ENCODE measurements at regions of chr17 and their contacts with region 1.

Region 1: GRCh38 chr17:57747221-57748017 is 2.3 kb upstream of the CCDC182 start:
- DNase-seq: no peak
- H3K4me3 ChIP-seq: no peak overlapping the region
- H3K27ac ChIP-seq: no peak overlapping the region
- H3K4me1 ChIP-seq: peaks cover 0 to 41% (median 16%) of the 10 kb centered on the region in 6 donors
- H3K27me3 ChIP-seq: no peaks in the 10 kb centered on the region
- CTCF ChIP-seq: peak; percentile 36 to 81 (median 73)
- POLR2A ChIP-seq: no peak

Region 2: DNA sequence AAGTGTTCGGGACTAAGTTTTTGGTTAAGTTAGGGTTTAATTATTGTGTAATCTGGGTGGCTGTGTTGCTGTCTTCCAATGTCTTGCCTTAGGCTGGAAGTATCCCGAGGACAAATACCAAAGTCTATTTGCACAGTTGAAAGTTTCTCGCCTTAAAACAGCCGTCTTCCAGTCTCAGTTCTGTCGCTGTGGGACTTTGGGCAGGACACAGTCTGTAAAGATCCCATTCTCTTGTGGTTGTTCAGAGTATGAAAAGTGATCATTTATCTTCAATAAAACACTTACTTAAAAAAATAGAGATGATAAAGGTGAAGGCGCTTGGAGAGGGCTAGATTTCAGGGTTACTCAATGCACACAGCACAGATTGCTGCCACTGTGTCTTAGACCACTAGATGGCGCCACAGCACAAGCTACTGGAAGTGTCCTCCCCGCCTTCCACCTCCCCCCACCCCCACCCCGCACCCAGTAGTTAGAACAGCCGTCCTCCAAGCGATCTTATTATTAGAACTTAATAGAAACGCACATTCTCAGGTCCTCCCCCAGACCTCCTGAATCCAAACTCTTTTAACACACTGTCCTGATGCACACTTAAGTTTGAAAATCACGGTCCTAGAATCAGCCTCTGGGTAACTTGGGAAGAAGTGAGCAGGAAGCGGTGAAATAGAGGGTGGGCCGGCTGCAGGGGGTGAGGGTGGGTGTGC is 616.5 kb before region 1 on chr17:
- intact Hi-C with region 1: loop called (anchors 5 kb)
- DNase-seq: peak; percentile 89
- H3K4me3 ChIP-seq: peak overlapping the region in 1 of 8 donors; percentile 44
- H3K27ac ChIP-seq: no peak overlapping the region
- H3K4me1 ChIP-seq: peaks cover 0 to 11% (median 2%) of the 10 kb centered on the region in 6 donors
- H3K27me3 ChIP-seq: peaks cover 0 to 1% (median 0%) of the 10 kb centered on the region in 7 donors
- CTCF ChIP-seq: peak; percentile 49 to 93 (median 85)
- POLR2A ChIP-seq: no peak

Region 3: DNA sequence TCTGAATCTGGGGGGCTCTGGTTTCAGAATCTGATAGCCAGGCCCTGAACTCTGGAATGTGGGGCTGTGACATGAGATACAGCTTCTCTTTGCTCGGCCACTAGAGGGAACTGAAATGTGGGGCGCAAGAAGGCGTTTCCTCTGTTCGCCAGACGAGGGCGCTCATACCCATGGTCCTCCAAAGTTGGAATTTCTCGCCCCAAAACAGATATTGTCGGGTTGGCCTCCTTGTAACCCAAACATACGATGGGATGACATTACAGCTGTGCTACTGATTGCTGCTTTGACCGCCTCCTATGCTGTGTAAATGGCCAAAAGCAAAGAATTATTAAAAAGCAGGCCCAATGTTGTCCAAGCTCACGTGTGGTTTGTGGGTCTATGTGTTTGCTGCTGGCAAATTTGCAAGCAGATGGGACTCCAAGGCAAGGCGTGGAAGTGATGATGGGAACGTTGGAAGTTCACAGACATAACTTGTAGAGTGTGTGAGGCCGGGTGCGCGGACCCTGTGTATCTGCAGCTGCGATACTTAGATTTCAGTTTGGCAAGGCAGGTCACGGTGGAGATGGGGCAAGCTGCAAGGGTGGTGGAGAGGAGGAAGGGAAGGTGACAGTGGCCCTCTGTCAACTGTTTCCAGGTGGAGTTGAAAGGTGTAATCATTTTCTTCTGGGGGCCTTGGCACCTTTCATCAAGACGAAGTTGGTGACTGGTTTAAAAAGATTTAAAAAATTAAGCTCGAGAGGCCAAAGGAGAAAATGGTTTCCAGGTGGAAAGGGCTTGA is 504.1 kb before region 1 on chr17:
- intact Hi-C with region 1: loop called (anchors 5 kb)
- DNase-seq: peak; percentile 87
- H3K4me3 ChIP-seq: no peak overlapping the region
- H3K27ac ChIP-seq: no peak overlapping the region
- H3K4me1 ChIP-seq: peaks cover 0 to 21% (median 2%) of the 10 kb centered on the region in 6 donors
- H3K27me3 ChIP-seq: no peaks in the 10 kb centered on the region
- CTCF ChIP-seq: peak; percentile 83 to 99 (median 97)
- POLR2A ChIP-seq: no peak

Region 4: GRCh38 chr17:57597531-57598453 is 149.6 kb before region 1 on chr17:
- intact Hi-C with region 1: loop called (anchors 5 kb)
- DNase-seq: no peak
- H3K4me3 ChIP-seq: no peak overlapping the region
- H3K27ac ChIP-seq: peak overlapping the region in 4 of 8 donors; percentile 6 to 70 (median 22)
- H3K4me1 ChIP-seq: peaks cover 35 to 79% (median 55%) of the 10 kb centered on the region in 6 donors
- H3K27me3 ChIP-seq: no peaks in the 10 kb centered on the region
- CTCF ChIP-seq: peak; percentile 42 to 80 (median 72)
- POLR2A ChIP-seq: no peak

Measured in spleen (tissue), 13 donors.